CD8-positive, alpha-beta T cell (primary cell): ENCODE measurements at regions of chrX and their contacts with region 1.

Region 1: DNA sequence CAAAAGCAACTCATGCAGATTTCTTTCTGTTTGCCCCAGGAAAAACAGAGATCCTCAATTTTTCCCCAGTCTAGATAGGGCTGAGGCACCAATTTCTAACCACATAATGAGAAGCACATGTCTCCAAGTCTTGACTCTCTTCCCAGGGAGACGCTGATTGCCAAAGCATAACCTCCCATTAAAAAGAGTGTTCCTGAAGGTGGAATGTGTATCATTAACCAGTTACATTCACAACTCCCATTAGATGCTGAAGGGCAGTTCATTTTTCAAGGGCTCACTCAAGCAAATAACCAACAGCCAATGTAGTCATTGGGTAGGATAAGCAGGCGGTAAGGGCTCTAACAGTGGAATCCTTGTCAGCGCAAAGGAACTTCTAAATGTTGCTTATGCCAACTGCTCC is 27.5 kb downstream of the TMEM47 start:
- DNase-seq: no peak
- ATAC-seq: no peak
- H3K4me3 ChIP-seq: no peak overlapping the region
- H3K4me3 Mint-ChIP-seq: no peak overlapping the region
- H3K27ac ChIP-seq: no peak overlapping the region
- H3K27ac Mint-ChIP-seq: no peak overlapping the region
- H3K4me1 ChIP-seq: no peaks in the 10 kb centered on the region
- H3K4me1 Mint-ChIP-seq: no peaks in the 10 kb centered on the region
- H3K27me3 ChIP-seq: no peaks in the 10 kb centered on the region
- H3K27me3 Mint-ChIP-seq: no peaks in the 10 kb centered on the region
- CTCF ChIP-seq: no peak

Region 2: GRCh38 chrX:33840176-33840575 is 789.4 kb before region 1 on chrX:
- CTCF ChIA-PET with region 1: no interaction called
- POLR2A ChIA-PET with region 1: no interaction called
- intact Hi-C with region 1: loop called in 1 of 2 experiments (anchors 5 kb)
- DNase-seq: no peak
- ATAC-seq: no peak
- H3K4me3 ChIP-seq: no peak overlapping the region
- H3K4me3 Mint-ChIP-seq: no peak overlapping the region
- H3K27ac ChIP-seq: no peak overlapping the region
- H3K27ac Mint-ChIP-seq: no peak overlapping the region
- H3K4me1 ChIP-seq: no peaks in the 10 kb centered on the region
- H3K4me1 Mint-ChIP-seq: no peaks in the 10 kb centered on the region
- H3K27me3 ChIP-seq: no peaks in the 10 kb centered on the region
- H3K27me3 Mint-ChIP-seq: no peaks in the 10 kb centered on the region
- CTCF ChIP-seq: no peak

Region 3: DNA sequence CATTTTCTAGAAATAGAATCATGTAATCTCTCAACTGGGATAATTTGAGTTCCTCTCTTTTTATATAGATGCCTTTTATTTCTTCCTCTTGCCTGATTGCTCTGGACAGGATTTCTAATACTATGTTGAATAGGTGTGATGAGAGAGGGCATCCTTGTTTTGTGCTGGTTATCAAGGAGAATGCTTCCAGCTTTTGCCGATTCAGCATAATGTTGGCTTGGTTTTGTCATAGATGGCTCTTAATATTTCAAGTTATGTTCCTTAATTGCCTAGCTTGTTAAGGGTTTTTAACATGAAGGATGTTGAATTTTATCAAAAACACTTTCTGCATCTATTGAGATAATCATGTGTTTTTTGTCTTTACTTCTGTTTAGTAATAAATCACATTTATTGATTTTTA is 31.2 kb before region 1 on chrX:
- CTCF ChIA-PET with region 1: interaction called, 4 read pairs
- POLR2A ChIA-PET with region 1: no interaction called
- intact Hi-C with region 1: loop called in 1 of 2 experiments (anchors 2 kb)
- DNase-seq: no peak
- ATAC-seq: no peak
- H3K4me3 ChIP-seq: no peak overlapping the region
- H3K4me3 Mint-ChIP-seq: no peak overlapping the region
- H3K27ac ChIP-seq: no peak overlapping the region
- H3K27ac Mint-ChIP-seq: no peak overlapping the region
- H3K4me1 ChIP-seq: no peaks in the 10 kb centered on the region
- H3K4me1 Mint-ChIP-seq: no peaks in the 10 kb centered on the region
- H3K27me3 ChIP-seq: no peaks in the 10 kb centered on the region
- H3K27me3 Mint-ChIP-seq: no peaks in the 10 kb centered on the region
- CTCF ChIP-seq: no peak

Region 4: GRCh38 chrX:34642849-34643248 is 13.3 kb after region 1 on chrX:
- CTCF ChIA-PET with region 1: no interaction called
- POLR2A ChIA-PET with region 1: no interaction called
- intact Hi-C with region 1: no loop called
- DNase-seq: no peak
- ATAC-seq: no peak
- H3K4me3 ChIP-seq: no peak overlapping the region
- H3K4me3 Mint-ChIP-seq: no peak overlapping the region
- H3K27ac ChIP-seq: no peak overlapping the region
- H3K27ac Mint-ChIP-seq: no peak overlapping the region
- H3K4me1 ChIP-seq: no peaks in the 10 kb centered on the region
- H3K4me1 Mint-ChIP-seq: no peaks in the 10 kb centered on the region
- H3K27me3 ChIP-seq: no peaks in the 10 kb centered on the region
- H3K27me3 Mint-ChIP-seq: no peaks in the 10 kb centered on the region
- CTCF ChIP-seq: no peak

Region 5: DNA sequence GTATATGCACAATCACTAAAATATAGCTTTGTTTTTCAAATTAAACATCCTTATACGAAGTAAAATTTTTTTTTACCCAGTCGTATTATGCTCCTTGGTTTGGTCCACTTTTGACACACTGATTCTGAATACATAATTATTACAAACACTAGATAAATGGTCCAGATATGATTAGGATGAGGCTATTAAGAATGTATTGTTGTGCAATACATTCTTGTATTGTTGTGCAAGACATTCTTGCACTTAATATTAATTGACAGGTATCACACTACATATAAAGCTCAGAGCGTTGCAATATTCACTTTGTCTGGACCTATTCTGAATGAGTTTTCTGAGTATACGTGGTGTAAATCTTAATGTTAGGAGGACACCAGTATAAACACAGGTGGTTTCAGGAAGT is 1753.9 kb after region 1 on chrX:
- CTCF ChIA-PET with region 1: no interaction called
- POLR2A ChIA-PET with region 1: no interaction called
- intact Hi-C with region 1: no loop called
- DNase-seq: no peak
- ATAC-seq: no peak
- H3K4me3 ChIP-seq: no peak overlapping the region
- H3K4me3 Mint-ChIP-seq: no peak overlapping the region
- H3K27ac ChIP-seq: no peak overlapping the region
- H3K27ac Mint-ChIP-seq: no peak overlapping the region
- H3K4me1 ChIP-seq: no peaks in the 10 kb centered on the region
- H3K4me1 Mint-ChIP-seq: no peaks in the 10 kb centered on the region
- H3K27me3 ChIP-seq: no peaks in the 10 kb centered on the region
- H3K27me3 Mint-ChIP-seq: no peaks in the 10 kb centered on the region
- CTCF ChIP-seq: no peak